ENCODE measurements at regions of chr10 and their contacts with region 1.

Region 1: GRCh38 chr10:125160856-125161706 is 718 bp upstream of the CTBP2 start:
- DNase-seq: peak; percentile 85
- ATAC-seq: peak; percentile 74
- H3K4me3 ChIP-seq: peak overlapping the region; percentile 98
- H3K27ac ChIP-seq: peak overlapping the region; percentile 84
- H3K4me1 ChIP-seq: peaks cover 7% of the 10 kb centered on the region; the same call in 1 of the 2 replicates
- H3K27me3 ChIP-seq: no peaks in the 10 kb centered on the region
- CTCF ChIP-seq: peak; percentile 47
- POLR2A ChIP-seq: peak; percentile 75; the same call in 1 of the 2 replicates
- RAD21 ChIP-seq: peak; percentile 58

Region 2: GRCh38 chr10:124802313-124802675 is 358.8 kb before region 1 on chr10:
- CTCF ChIA-PET with region 1: no interaction called
- POLR2A ChIA-PET with region 1: no interaction called
- dilution Hi-C with region 1: no loop called
- in situ Hi-C with region 1: no loop called
- intact Hi-C with region 1: no loop called
- DNase-seq: no peak
- ATAC-seq: peak; percentile 2; the same call in 1 of the 2 replicates
- H3K4me3 ChIP-seq: peak overlapping the region; percentile 67
- H3K27ac ChIP-seq: peak overlapping the region; percentile 31; the same call in 1 of the 2 replicates
- H3K4me1 ChIP-seq: no peaks in the 10 kb centered on the region
- H3K27me3 ChIP-seq: no peaks in the 10 kb centered on the region; the same call in 1 of the 2 replicates
- CTCF ChIP-seq: no peak
- POLR2A ChIP-seq: no peak
- RAD21 ChIP-seq: no peak

Region 3: GRCh38 chr10:125000366-125001312 is 160.4 kb before region 1 on chr10:
- CTCF ChIA-PET with region 1: no interaction called
- POLR2A ChIA-PET with region 1: no interaction called
- dilution Hi-C with region 1: no loop called
- in situ Hi-C with region 1: no loop called
- intact Hi-C with region 1: loop called (anchors 5 kb)
- DNase-seq: peak; percentile 57
- ATAC-seq: peak; percentile 11; the same call in 1 of the 2 replicates
- H3K4me3 ChIP-seq: no peak overlapping the region
- H3K27ac ChIP-seq: peak overlapping the region; percentile 59; the same call in 1 of the 2 replicates
- H3K4me1 ChIP-seq: peaks cover 32% of the 10 kb centered on the region
- H3K27me3 ChIP-seq: no peaks in the 10 kb centered on the region
- CTCF ChIP-seq: peak; percentile 36
- POLR2A ChIP-seq: no peak
- RAD21 ChIP-seq: peak; percentile 48; the same call in 1 of the 2 replicates

Region 4: GRCh38 chr10:125231116-125231812 is 70.2 kb after region 1 on chr10:
- CTCF ChIA-PET with region 1: no interaction called
- POLR2A ChIA-PET with region 1: no interaction called
- dilution Hi-C with region 1: no loop called
- in situ Hi-C with region 1: no loop called
- intact Hi-C with region 1: loop called (anchors 1 kb)
- DNase-seq: peak; percentile 98
- ATAC-seq: peak; percentile 96
- H3K4me3 ChIP-seq: no peak overlapping the region
- H3K27ac ChIP-seq: peak overlapping the region; percentile 46
- H3K4me1 ChIP-seq: peaks cover 12% of the 10 kb centered on the region
- H3K27me3 ChIP-seq: no peaks in the 10 kb centered on the region
- CTCF ChIP-seq: peak; percentile 23; the same call in 1 of the 2 replicates
- POLR2A ChIP-seq: no peak; the same call in 1 of the 2 replicates
- RAD21 ChIP-seq: peak; percentile 39

Region 5: GRCh38 chr10:125629763-125630376 is 468.8 kb after region 1 on chr10:
- CTCF ChIA-PET with region 1: no interaction called
- POLR2A ChIA-PET with region 1: no interaction called
- dilution Hi-C with region 1: no loop called
- in situ Hi-C with region 1: no loop called
- intact Hi-C with region 1: loop called (anchors 5 kb)
- DNase-seq: peak; percentile 53
- ATAC-seq: peak; percentile 65; the same call in 1 of the 2 replicates
- H3K4me3 ChIP-seq: no peak overlapping the region
- H3K27ac ChIP-seq: no peak overlapping the region
- H3K4me1 ChIP-seq: no peaks in the 10 kb centered on the region
- H3K27me3 ChIP-seq: peaks cover 4% of the 10 kb centered on the region
- CTCF ChIP-seq: peak; percentile 41
- POLR2A ChIP-seq: no peak
- RAD21 ChIP-seq: peak; percentile 51

Region 6: GRCh38 chr10:125707541-125708468 is 546.7 kb after region 1 on chr10:
- CTCF ChIA-PET with region 1: no interaction called
- POLR2A ChIA-PET with region 1: no interaction called
- dilution Hi-C with region 1: no loop called
- in situ Hi-C with region 1: loop called (anchors 10 kb)
- intact Hi-C with region 1: no loop called
- DNase-seq: peak; percentile 35
- ATAC-seq: peak; percentile 78
- H3K4me3 ChIP-seq: no peak overlapping the region
- H3K27ac ChIP-seq: no peak overlapping the region
- H3K4me1 ChIP-seq: peaks cover 4% of the 10 kb centered on the region
- H3K27me3 ChIP-seq: peaks cover 2% of the 10 kb centered on the region
- CTCF ChIP-seq: no peak
- POLR2A ChIP-seq: no peak
- RAD21 ChIP-seq: no peak